ENCODE measurements at regions of chr11 and their contacts with region 1.

Region 1: DNA sequence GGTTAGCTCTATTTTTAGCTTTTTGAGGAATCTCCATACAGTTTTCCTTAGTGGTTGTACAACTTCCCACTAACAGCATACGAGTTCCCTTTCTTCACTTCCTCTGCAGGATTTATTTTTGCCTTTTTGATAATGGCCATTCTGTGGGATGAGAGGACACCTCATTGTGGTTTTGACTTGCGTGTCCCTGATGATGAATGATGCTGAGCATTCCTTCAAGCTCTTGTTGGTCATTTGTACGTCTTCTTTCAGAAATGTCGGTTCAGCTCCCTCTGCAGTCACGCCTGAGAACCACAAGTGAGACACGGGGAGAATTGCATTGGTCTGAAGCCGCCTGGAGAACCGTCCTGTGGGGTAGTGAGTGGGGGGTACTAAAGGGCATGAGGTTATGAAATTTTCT is 2.0 kb upstream of the KRTAP5-10 start:
- DNase-seq: peak; percentile 51
- ATAC-seq: peak; percentile 92
- H3K4me3 ChIP-seq: no peak overlapping the region
- H3K27ac ChIP-seq: no peak overlapping the region
- H3K4me1 ChIP-seq: peaks cover 0 to 16% of the 10 kb centered on the region in 2 experiments; a peak in 2 of 4 replicates
- H3K27me3 ChIP-seq: peaks cover 10% of the 10 kb centered on the region; the same call in 1 of the 2 replicates
- CTCF ChIP-seq: peak; percentile 32 to 70 (median 68); a peak in 4 of 6 replicates
- POLR2A ChIP-seq: no peak
- RAD21 ChIP-seq: peak; percentile 74

Region 2: DNA sequence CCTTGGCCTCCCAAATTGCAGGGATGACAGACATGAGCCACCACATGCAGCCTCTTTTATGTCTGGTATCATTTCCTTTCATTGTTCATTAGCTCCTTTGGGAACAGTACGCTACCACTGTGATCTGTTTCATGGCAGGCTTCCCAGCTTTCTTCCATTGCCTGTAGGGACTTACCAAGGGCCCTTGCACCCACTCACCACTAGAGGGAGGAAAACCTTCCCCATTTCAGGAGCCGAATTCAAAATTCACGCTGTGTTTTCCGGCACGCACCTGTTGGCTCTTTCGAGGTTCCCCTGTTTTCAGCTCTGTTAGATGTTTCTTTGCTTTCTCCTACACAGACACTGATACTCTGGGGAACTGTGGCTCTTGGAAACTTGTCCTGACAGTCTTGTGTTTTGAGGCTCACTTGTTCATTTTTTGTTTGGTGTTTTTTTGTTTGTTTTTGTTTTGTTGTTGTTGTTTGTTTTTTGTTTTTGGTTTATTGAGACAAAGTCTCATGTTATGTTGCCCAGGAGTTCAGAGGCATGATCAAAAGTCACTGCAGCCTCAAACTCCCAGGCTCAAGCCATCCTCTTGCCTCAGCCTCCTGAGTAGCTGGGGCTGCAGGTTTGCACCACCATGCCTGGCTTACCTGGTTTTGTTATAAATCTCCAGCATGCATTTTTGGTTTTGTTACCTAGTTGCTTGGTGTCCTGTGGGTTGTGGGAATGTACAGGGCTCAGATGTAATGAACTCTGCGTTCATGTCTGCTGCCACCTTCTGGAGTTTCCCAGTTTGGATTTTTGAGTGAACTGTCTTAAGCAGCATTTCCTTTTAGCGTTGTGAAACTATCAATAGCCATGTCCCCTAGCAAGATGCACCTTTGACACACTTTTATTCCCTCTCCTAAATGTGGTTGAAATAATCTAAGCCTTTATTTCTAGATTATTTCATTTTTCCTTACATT is 16.9 kb after region 1 on chr11:
- CTCF ChIA-PET with region 1: interaction called, 19 read pairs
- POLR2A ChIA-PET with region 1: no interaction called
- RAD21 ChIA-PET with region 1: no interaction called
- intact Hi-C with region 1: no loop called
- DNase-seq: peak; percentile 48
- ATAC-seq: peak; percentile 95
- H3K4me3 ChIP-seq: no peak overlapping the region
- H3K27ac ChIP-seq: no peak overlapping the region
- H3K4me1 ChIP-seq: peaks cover 0 to 4% of the 10 kb centered on the region in 2 experiments; a peak in 1 of 4 replicates
- H3K27me3 ChIP-seq: peaks cover 4% of the 10 kb centered on the region; the same call in 1 of the 2 replicates
- CTCF ChIP-seq: peak; percentile 76 to 91 (median 83)
- POLR2A ChIP-seq: no peak
- RAD21 ChIP-seq: peak; percentile 44; the same call in 1 of the 2 replicates